ENCODE measurements at regions of chr7 and their contacts with region 1.

Region 1: GRCh38 chr7:4797858-4798705 is 22.7 kb downstream of the AP5Z1 start:
- DNase-seq: peak; percentile 97
- H3K4me3 ChIP-seq: no peak overlapping the region
- H3K27ac ChIP-seq: peak overlapping the region in 1 of 2 experiments; percentile 41; a peak in 1 of 4 replicates
- H3K4me1 ChIP-seq: peaks cover 0 to 9% of the 10 kb centered on the region in 2 experiments; a peak in 1 of 4 replicates
- H3K27me3 ChIP-seq: no peaks in the 10 kb centered on the region
- CTCF ChIP-seq: peak; percentile 76
- EP300 ChIP-seq: no peak
- RAD21 ChIP-seq: peak; percentile 69

Region 2: DNA sequence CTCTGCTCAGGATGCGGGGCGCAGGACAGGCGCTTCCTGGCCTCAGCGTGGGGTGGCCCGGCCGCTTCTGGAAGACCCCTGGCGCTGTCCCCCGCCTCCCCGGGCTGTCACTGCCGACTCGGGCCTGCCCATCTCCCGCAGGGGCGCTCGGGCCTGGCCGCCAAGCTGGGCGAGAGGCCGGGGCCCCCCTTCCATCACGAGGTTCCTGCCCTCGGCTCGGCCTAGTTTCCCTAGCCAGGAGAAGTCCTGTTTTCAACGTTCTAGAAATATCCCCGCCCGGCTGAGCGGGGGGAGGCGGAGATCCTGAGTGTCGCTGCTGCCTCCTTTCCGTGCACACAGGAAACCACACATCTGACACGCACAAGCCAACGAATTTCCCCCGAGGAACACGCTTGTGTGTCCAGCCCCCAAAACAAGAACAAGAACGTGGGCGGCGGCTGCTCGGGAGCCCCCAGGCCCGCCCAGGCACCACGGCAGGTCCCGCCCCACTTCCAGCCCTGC is 11.1 kb after region 1 on chr7:
- CTCF ChIA-PET with region 1: interaction called, 19 read pairs
- POLR2A ChIA-PET with region 1: no interaction called
- DNase-seq: no peak
- H3K4me3 ChIP-seq: no peak overlapping the region
- H3K27ac ChIP-seq: no peak overlapping the region
- H3K4me1 ChIP-seq: no peaks in the 10 kb centered on the region
- H3K27me3 ChIP-seq: no peaks in the 10 kb centered on the region
- CTCF ChIP-seq: no peak
- EP300 ChIP-seq: no peak
- RAD21 ChIP-seq: no peak

Region 3: GRCh38 chr7:4849369-4849768 is 51.3 kb after region 1 on chr7:
- CTCF ChIA-PET with region 1: interaction called, 26 read pairs
- POLR2A ChIA-PET with region 1: no interaction called
- DNase-seq: peak; percentile 81
- H3K4me3 ChIP-seq: no peak overlapping the region
- H3K27ac ChIP-seq: peak overlapping the region in 1 of 2 experiments; percentile 5; a peak in 1 of 4 replicates
- H3K4me1 ChIP-seq: peaks cover 0 to 19% of the 10 kb centered on the region in 2 experiments; a peak in 2 of 4 replicates
- H3K27me3 ChIP-seq: no peaks in the 10 kb centered on the region
- CTCF ChIP-seq: peak; percentile 51
- EP300 ChIP-seq: peak in 1 of 2 experiments; percentile 45; a peak in 1 of 4 replicates
- RAD21 ChIP-seq: peak; percentile 95

Region 4: GRCh38 chr7:5083311-5083711 is 285.2 kb after region 1 on chr7:
- CTCF ChIA-PET with region 1: interaction called, 98 read pairs
- POLR2A ChIA-PET with region 1: no interaction called
- DNase-seq: peak; percentile 63
- H3K4me3 ChIP-seq: peak overlapping the region; percentile 9 to 35; a peak in 2 of 4 replicates
- H3K27ac ChIP-seq: no peak overlapping the region
- H3K4me1 ChIP-seq: peaks cover 0 to 10% of the 10 kb centered on the region in 2 experiments; a peak in 1 of 4 replicates
- H3K27me3 ChIP-seq: peaks cover 36% of the 10 kb centered on the region
- CTCF ChIP-seq: no peak
- EP300 ChIP-seq: no peak
- RAD21 ChIP-seq: peak; percentile 2; the same call in 1 of the 2 replicates